ENCODE measurements at regions of chr10 and their contacts with region 1.

Region 1: GRCh38 chr10:18214691-18215563 is 74.7 kb downstream of the CACNB2 start:
- DNase-seq: peak; percentile 73
- ATAC-seq: peak; percentile 90
- H3K4me3 ChIP-seq: no peak overlapping the region
- H3K27ac ChIP-seq: no peak overlapping the region
- H3K4me1 ChIP-seq: peaks cover 3% of the 10 kb centered on the region
- H3K27me3 ChIP-seq: no peaks in the 10 kb centered on the region; the same call in 1 of the 2 replicates
- CTCF ChIP-seq: peak; percentile 90
- POLR2A ChIP-seq: no peak
- RAD21 ChIP-seq: peak; percentile 92

Region 2: GRCh38 chr10:17737027-17737965 is 477.6 kb before region 1 on chr10:
- CTCF ChIA-PET with region 1: no interaction called
- POLR2A ChIA-PET with region 1: no interaction called
- dilution Hi-C with region 1: no loop called
- in situ Hi-C with region 1: no loop called
- intact Hi-C with region 1: loop called (anchors 2 kb)
- DNase-seq: peak; percentile 55
- ATAC-seq: peak; percentile 62
- H3K4me3 ChIP-seq: no peak overlapping the region
- H3K27ac ChIP-seq: no peak overlapping the region
- H3K4me1 ChIP-seq: no peaks in the 10 kb centered on the region
- H3K27me3 ChIP-seq: no peaks in the 10 kb centered on the region
- CTCF ChIP-seq: peak; percentile 63
- POLR2A ChIP-seq: no peak
- RAD21 ChIP-seq: peak; percentile 42

Region 3: DNA sequence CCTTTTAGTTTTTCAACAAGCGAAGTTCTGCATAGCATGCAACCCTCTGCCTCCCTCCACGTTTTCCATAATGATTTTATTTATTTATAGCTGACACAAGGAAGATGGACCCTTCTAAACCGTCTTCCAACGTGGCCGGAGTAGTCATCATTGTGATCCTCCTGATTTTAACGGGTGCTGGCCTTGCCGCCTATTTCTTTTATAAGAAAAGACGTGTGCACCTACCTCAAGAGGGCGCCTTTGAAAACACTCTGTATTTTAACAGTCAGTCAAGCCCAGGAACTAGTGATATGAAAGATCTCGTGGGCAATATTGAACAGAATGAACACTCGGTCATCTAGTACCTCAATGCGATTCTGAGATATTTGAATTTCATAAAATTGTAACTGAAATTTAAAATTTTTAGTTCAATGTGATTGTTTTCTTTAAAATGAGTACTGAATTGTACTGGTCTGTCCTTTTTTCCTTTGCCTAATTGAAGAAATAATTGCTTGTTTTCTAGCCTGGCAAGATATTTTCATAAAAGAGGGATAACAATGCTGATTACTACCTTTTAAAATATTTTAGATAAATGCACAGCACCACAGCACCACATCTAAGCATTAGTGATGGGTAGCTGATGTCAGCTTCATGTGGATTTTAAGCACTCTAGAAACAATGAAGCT is 304.7 kb before region 1 on chr10:
- CTCF ChIA-PET with region 1: interaction called, 5 read pairs
- POLR2A ChIA-PET with region 1: no interaction called
- dilution Hi-C with region 1: no loop called
- in situ Hi-C with region 1: no loop called
- intact Hi-C with region 1: loop called (anchors 1 kb)
- DNase-seq: peak; percentile 63
- ATAC-seq: peak; percentile 49; the same call in 1 of the 2 replicates
- H3K4me3 ChIP-seq: no peak overlapping the region
- H3K27ac ChIP-seq: no peak overlapping the region
- H3K4me1 ChIP-seq: no peaks in the 10 kb centered on the region
- H3K27me3 ChIP-seq: peaks cover 4% of the 10 kb centered on the region; the same call in 1 of the 2 replicates
- CTCF ChIP-seq: peak; percentile 65
- POLR2A ChIP-seq: no peak
- RAD21 ChIP-seq: peak; percentile 63

Region 4: GRCh38 chr10:18140149-18140956 is 74.6 kb before region 1 on chr10 and contains the start of gene CACNB2:
- CTCF ChIA-PET with region 1: no interaction called
- POLR2A ChIA-PET with region 1: no interaction called
- dilution Hi-C with region 1: no loop called
- in situ Hi-C with region 1: no loop called
- intact Hi-C with region 1: loop called (anchors 5 kb)
- DNase-seq: peak; percentile 51
- ATAC-seq: peak; percentile 85
- H3K4me3 ChIP-seq: peak within 1 kb of the TSS; percentile 49
- H3K27ac ChIP-seq: no peak within 1 kb of the TSS
- H3K4me1 ChIP-seq: no peaks in the 10 kb centered on the region
- H3K27me3 ChIP-seq: peaks cover 51% of the 10 kb centered on the region
- CTCF ChIP-seq: no peak
- POLR2A ChIP-seq: no peak
- RAD21 ChIP-seq: no peak
- total RNA-seq, gene CACNB2: 0.28 and 0.36 TPM in 2 replicates

Region 5: GRCh38 chr10:19762026-19762425 is 1547.1 kb after region 1 on chr10:
- CTCF ChIA-PET with region 1: no interaction called
- POLR2A ChIA-PET with region 1: no interaction called
- dilution Hi-C with region 1: no loop called
- in situ Hi-C with region 1: no loop called
- intact Hi-C with region 1: no loop called
- DNase-seq: no peak
- ATAC-seq: no peak; the same call in 1 of the 2 replicates
- H3K4me3 ChIP-seq: no peak overlapping the region
- H3K27ac ChIP-seq: no peak overlapping the region
- H3K4me1 ChIP-seq: no peaks in the 10 kb centered on the region
- H3K27me3 ChIP-seq: no peaks in the 10 kb centered on the region
- CTCF ChIP-seq: no peak
- POLR2A ChIP-seq: no peak
- RAD21 ChIP-seq: no peak